Caco-2 (cell line): ENCODE measurements at regions of chr19 and their contacts with region 1.

Region 1: GRCh38 chr19:35995048-35995993 is at the start of gene SDHAF1:
- DNase-seq: peak; percentile 97
- H3K4me3 ChIP-seq: peak within 1 kb of the TSS; percentile 98
- H3K4me3 Mint-ChIP-seq: peak within 1 kb of the TSS; percentile 95
- H3K27ac Mint-ChIP-seq: peak within 1 kb of the TSS; percentile 93
- H3K4me1 ChIP-seq: no peaks in the 10 kb centered on the region
- H3K4me1 Mint-ChIP-seq: peaks cover 11% of the 10 kb centered on the region
- H3K27me3 ChIP-seq: no peaks in the 10 kb centered on the region
- H3K27me3 Mint-ChIP-seq: no peaks in the 10 kb centered on the region
- CTCF ChIP-seq: no peak
- total RNA-seq, gene SDHAF1: 26.2 and 28.1 TPM in 2 replicates

Region 2: GRCh38 chr19:35748106-35749020 is 247.0 kb before region 1 on chr19 and contains the start of gene LIN37:
- CTCF ChIA-PET with region 1: no interaction called
- POLR2A ChIA-PET with region 1: no interaction called
- intact Hi-C with region 1: no loop called
- DNase-seq: peak; percentile 99
- H3K4me3 ChIP-seq: peak within 1 kb of the TSS; percentile 58
- H3K4me3 Mint-ChIP-seq: peak within 1 kb of the TSS; percentile 89
- H3K27ac Mint-ChIP-seq: peak within 1 kb of the TSS; percentile 71
- H3K4me1 ChIP-seq: peaks cover 7% of the 10 kb centered on the region
- H3K4me1 Mint-ChIP-seq: peaks cover 18% of the 10 kb centered on the region
- H3K27me3 ChIP-seq: no peaks in the 10 kb centered on the region
- H3K27me3 Mint-ChIP-seq: no peaks in the 10 kb centered on the region
- CTCF ChIP-seq: no peak
- total RNA-seq, gene LIN37: 8.1 and 10.2 TPM in 2 replicates

Region 3: GRCh38 chr19:36009220-36009619 is 13.9 kb after region 1 on chr19:
- CTCF ChIA-PET with region 1: interaction called, 5 read pairs
- POLR2A ChIA-PET with region 1: interaction called, 15 read pairs
- intact Hi-C with region 1: loop called (anchors 2 kb)
- DNase-seq: peak; percentile 65 to 75
- H3K4me3 ChIP-seq: peak overlapping the region; percentile 75
- H3K4me3 Mint-ChIP-seq: peak overlapping the region; percentile 89
- H3K27ac Mint-ChIP-seq: peak overlapping the region; percentile 89
- H3K4me1 ChIP-seq: peaks cover 5% of the 10 kb centered on the region; the same call in 1 of the 2 replicates
- H3K4me1 Mint-ChIP-seq: peaks cover 24% of the 10 kb centered on the region
- H3K27me3 ChIP-seq: no peaks in the 10 kb centered on the region
- H3K27me3 Mint-ChIP-seq: no peaks in the 10 kb centered on the region
- CTCF ChIP-seq: peak in 1 of 2 experiments; percentile 0